Cardiac septum (tissue), 1 donor: ENCODE measurements at regions of chr6 and their contacts with region 1.

Region 1: GRCh38 chr6:94584211-94584610 is 993.1 kb upstream of the MANEA start:
- DNase-seq: no peak

Region 2: DNA sequence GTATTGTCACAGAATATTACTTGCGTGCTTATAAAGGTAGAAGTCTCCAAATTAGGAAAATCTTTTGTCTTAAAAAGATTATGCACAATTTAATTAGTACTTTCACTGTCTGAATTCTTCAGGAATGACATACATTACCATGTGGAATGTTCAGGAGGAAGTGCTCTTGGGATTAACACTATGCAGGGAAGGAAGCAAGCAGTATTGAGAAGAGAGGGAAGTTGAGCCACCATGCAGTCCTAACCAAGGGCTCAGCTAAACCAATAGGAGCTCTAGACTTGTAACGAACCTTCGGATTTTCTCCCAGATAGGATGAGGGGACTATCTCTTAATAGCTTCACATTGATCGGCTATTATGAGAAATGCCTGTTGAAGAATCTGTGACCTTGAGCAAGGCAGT is 74.7 kb after region 1 on chr6:
- intact Hi-C with region 1: loop called (anchors 10 kb)
- DNase-seq: no peak